ENCODE measurements at regions of chr4 and their contacts with region 1.

Region 1: GRCh38 chr4:122758033-122758432 is 25.5 kb downstream of the BBS12 start:
- DNase-seq: no peak
- H3K4me3 Mint-ChIP-seq: no peak overlapping the region
- H3K27ac Mint-ChIP-seq: no peak overlapping the region
- H3K4me1 Mint-ChIP-seq: peaks cover 27% of the 10 kb centered on the region
- H3K27me3 Mint-ChIP-seq: peaks cover 27% of the 10 kb centered on the region

Region 2: GRCh38 chr4:122744229-122744628 is 13.8 kb before region 1 on chr4:
- CTCF ChIA-PET with region 1: interaction called, 13 read pairs
- POLR2A ChIA-PET with region 1: no interaction called
- DNase-seq: no peak
- H3K4me3 Mint-ChIP-seq: no peak overlapping the region
- H3K27ac Mint-ChIP-seq: no peak overlapping the region
- H3K4me1 Mint-ChIP-seq: peaks cover 33% of the 10 kb centered on the region
- H3K27me3 Mint-ChIP-seq: no peaks in the 10 kb centered on the region

Region 3: GRCh38 chr4:122882857-122883735 is 125.1 kb after region 1 on chr4:
- CTCF ChIA-PET with region 1: no interaction called
- POLR2A ChIA-PET with region 1: no interaction called
- DNase-seq: no peak
- H3K4me3 Mint-ChIP-seq: no peak overlapping the region
- H3K27ac Mint-ChIP-seq: no peak overlapping the region
- H3K4me1 Mint-ChIP-seq: no peaks in the 10 kb centered on the region
- H3K27me3 Mint-ChIP-seq: peaks cover 2% of the 10 kb centered on the region

Region 4: DNA sequence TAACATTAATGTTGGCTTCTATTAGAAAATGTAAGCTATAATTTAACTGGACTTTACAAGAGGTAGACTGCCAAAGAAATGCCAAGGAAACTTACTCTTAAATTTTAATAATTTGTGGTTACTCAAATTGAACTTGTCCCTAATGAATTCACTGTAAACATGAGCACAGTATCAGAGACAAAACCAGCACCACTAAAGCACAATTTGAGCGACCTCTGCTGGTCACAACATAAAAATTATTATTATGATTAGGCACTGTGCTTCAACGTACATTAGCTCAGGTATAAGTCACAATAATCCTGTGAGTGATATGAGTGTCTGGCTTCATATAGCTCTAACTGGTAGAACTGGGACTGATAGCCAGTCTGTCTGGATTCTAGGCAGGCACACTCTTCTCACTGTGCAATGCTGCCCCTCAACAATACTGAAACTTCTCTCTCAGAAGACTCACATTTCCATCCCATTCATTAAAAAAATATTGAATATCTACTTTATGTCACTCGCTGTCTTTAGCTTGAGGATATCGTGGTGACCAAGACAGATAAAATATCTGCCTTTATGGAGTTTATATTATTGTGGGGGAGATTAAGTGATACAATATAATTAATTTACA is 156.4 kb after region 1 on chr4:
- CTCF ChIA-PET with region 1: interaction called, 33 read pairs
- POLR2A ChIA-PET with region 1: no interaction called
- DNase-seq: no peak
- H3K4me3 Mint-ChIP-seq: no peak overlapping the region
- H3K27ac Mint-ChIP-seq: no peak overlapping the region
- H3K4me1 Mint-ChIP-seq: peaks cover 3% of the 10 kb centered on the region
- H3K27me3 Mint-ChIP-seq: no peaks in the 10 kb centered on the region

Region 5: GRCh38 chr4:122922877-122923511 is 165.0 kb after region 1 on chr4:
- CTCF ChIA-PET with region 1: interaction called, 18 read pairs
- POLR2A ChIA-PET with region 1: interaction called, 4 read pairs
- DNase-seq: peak; percentile 94
- H3K4me3 Mint-ChIP-seq: no peak overlapping the region
- H3K27ac Mint-ChIP-seq: no peak overlapping the region
- H3K4me1 Mint-ChIP-seq: peaks cover 27% of the 10 kb centered on the region
- H3K27me3 Mint-ChIP-seq: no peaks in the 10 kb centered on the region

Region 6: GRCh38 chr4:122930862-122931261 is 172.8 kb after region 1 on chr4:
- CTCF ChIA-PET with region 1: interaction called, 33 read pairs
- POLR2A ChIA-PET with region 1: no interaction called
- DNase-seq: no peak
- H3K4me3 Mint-ChIP-seq: no peak overlapping the region
- H3K27ac Mint-ChIP-seq: no peak overlapping the region
- H3K4me1 Mint-ChIP-seq: peaks cover 48% of the 10 kb centered on the region
- H3K27me3 Mint-ChIP-seq: no peaks in the 10 kb centered on the region

Region 7: DNA sequence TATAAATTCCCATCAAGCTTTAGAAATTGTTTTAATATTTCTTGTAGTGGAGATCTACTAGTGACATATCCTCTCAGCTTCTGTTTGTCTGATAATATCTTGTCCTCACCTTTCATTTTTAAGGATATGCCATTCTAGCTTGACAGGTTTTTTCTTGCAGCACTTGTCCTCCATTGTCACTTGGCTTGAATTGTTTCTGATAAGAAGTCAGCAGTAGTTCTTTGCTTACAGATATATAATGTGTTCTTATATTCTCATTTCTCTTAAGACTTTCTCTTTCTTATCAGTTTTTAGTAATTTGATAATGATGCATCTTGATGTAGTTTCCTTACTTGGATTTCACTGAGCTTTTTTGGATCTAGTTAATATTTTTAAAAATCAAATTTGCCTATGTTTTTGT is 285.0 kb after region 1 on chr4:
- CTCF ChIA-PET with region 1: no interaction called
- POLR2A ChIA-PET with region 1: no interaction called
- DNase-seq: no peak
- H3K4me3 Mint-ChIP-seq: no peak overlapping the region
- H3K27ac Mint-ChIP-seq: no peak overlapping the region
- H3K4me1 Mint-ChIP-seq: peaks cover 11% of the 10 kb centered on the region
- H3K27me3 Mint-ChIP-seq: no peaks in the 10 kb centered on the region